Heart right ventricle (tissue), 16 donors: ENCODE measurements at regions of chr1 and their contacts with region 1.

Region 1: GRCh38 chr1:225766967-225767633 is 10.5 kb upstream of the SRP9 start:
- DNase-seq: peak in 1 of 2 donors; percentile 65
- ATAC-seq: peak; percentile 29 to 77 (median 52)
- H3K4me3 ChIP-seq: no peak overlapping the region
- H3K27ac ChIP-seq: peak overlapping the region; percentile 46 to 89 (median 77)
- H3K4me1 ChIP-seq: peaks cover 27 to 94% (median 72%) of the 10 kb centered on the region in 9 donors
- H3K27me3 ChIP-seq: no peaks in the 10 kb centered on the region
- CTCF ChIP-seq: no peak

Region 2: DNA sequence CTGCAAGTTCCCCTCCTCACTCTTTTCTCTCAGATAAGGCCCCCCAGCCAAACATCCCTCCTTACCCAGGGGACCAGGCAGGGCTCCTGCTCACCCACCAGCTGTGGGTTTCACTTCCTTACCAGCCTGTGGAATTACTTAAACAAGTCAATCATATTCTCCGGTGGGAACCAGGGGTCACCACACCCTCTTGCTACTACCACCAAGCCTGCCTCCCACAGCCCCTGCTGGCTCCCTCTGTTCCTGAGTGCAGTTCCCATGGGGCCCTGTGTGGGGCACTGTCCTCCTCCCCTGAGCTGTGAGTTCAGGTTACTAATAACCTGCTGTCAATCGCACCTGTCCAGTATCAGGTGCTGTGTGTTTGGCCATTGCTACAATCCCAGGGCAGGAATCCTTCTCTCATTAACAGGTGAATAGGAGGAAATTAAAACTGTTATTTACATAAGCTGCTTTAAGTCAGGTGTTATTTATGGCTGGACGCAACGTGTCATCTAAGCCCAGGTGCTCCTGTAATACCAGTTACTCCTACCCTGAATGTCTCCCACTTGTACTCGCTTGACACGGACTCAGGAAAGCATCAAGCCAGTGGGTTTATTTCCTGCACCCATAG is 286.2 kb before region 1 on chr1:
- intact Hi-C with region 1: loop called in 3 of 10 experiments (anchors 2 to 5 kb)
- DNase-seq: peak in 1 of 2 donors; percentile 35
- ATAC-seq: peak in 6 of 8 donors; percentile 25 to 51 (median 36)
- H3K4me3 ChIP-seq: no peak overlapping the region
- H3K27ac ChIP-seq: no peak overlapping the region
- H3K4me1 ChIP-seq: peaks cover 0 to 10% (median 0%) of the 10 kb centered on the region in 9 donors
- H3K27me3 ChIP-seq: no peaks in the 10 kb centered on the region
- CTCF ChIP-seq: peak; percentile 28 to 76 (median 69)

Region 3: DNA sequence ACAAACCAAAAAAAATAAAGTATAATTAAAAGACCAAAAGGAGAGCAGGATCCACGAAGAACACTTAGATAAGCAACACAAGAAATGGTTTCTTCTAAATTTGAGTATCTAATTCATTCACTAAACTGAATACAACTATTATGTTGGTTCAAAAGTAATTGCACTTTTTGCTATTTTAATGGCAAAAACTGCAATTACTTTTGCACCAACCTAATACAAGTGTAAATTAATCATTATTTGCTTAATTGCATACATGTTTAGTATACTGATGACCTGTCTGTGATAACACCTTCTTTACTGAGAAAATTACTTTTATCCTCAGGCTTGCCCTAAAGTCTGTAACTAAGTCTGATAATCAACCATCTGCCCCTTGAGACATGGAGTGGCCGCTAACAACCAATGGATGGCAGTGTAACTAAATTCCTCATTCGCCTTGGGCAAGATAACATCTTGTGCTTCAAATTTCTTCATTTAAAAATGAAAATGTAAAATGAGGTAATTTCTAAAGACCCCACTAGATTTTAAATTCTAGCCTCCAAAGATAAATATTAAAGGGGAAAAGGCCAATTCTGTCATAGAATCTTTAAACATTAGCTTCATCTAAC is 199.4 kb before region 1 on chr1:
- intact Hi-C with region 1: loop called in 2 of 10 experiments (anchors 5 kb)
- DNase-seq: no peak
- ATAC-seq: no peak
- H3K4me3 ChIP-seq: no peak overlapping the region
- H3K27ac ChIP-seq: no peak overlapping the region
- H3K4me1 ChIP-seq: peaks cover 0 to 46% (median 23%) of the 10 kb centered on the region in 9 donors
- H3K27me3 ChIP-seq: no peaks in the 10 kb centered on the region
- CTCF ChIP-seq: peak in 5 of 9 donors; percentile 11 to 37 (median 25)

Region 4: DNA sequence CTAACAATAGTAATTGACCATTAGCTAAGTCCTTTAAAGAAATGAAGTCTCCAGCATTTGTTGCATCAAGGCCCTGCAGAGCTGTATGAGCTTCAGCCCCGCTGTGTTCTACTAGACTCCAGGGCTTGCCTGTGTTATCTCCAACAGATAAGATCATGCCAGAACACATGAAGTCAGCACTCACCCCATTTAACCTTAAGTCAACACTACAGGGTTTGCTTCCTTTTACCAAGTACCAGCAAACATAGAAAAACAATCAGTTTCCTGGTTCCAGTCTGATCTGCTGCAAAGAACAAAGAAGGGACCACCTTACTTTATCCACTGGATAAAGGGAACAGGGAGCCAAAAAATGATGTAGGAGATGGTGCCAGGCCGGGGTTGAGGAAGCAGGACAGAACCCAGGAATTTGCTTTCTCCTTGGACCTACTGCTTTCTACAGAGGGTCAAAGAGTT is 72.9 kb before region 1 on chr1:
- intact Hi-C with region 1: loop called in 2 of 10 experiments (anchors 2 to 5 kb)
- DNase-seq: peak; percentile 24 to 62
- ATAC-seq: peak; percentile 82 to 94 (median 92)
- H3K4me3 ChIP-seq: no peak overlapping the region
- H3K27ac ChIP-seq: peak overlapping the region in 8 of 10 donors; percentile 28 to 86 (median 59)
- H3K4me1 ChIP-seq: peaks cover 10 to 77% (median 59%) of the 10 kb centered on the region in 9 donors
- H3K27me3 ChIP-seq: no peaks in the 10 kb centered on the region
- CTCF ChIP-seq: no peak

Region 5: DNA sequence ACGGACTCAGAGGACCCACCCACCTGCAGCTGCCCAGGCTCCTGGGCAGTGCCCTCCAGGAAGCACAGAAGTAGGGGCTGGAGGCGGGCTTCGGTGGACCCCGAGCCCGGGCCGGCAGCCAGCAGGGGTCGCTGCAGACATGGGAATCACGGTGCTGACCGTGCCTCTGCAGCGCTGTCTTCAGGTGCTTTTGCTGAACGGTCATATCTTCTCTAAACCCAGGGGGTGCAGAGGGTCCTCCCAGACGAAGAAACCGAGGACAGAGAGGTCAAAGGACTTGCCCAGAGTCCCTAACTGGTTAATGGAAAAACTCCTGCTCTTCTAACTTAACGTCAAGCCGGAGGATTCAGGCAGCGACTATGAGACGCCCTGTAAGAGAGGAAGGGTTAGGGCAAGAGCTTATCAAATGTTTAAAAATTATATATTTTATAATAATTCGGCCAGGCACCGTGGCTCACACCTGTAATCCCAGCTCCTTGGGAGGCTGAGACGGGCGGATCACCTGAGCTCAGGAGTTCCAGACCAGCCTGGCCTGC is 195.4 kb after region 1 on chr1:
- intact Hi-C with region 1: no loop called
- DNase-seq: peak; percentile 25 to 57
- ATAC-seq: peak in 5 of 8 donors; percentile 46 to 70 (median 61)
- H3K4me3 ChIP-seq: no peak overlapping the region
- H3K27ac ChIP-seq: no peak overlapping the region
- H3K4me1 ChIP-seq: peaks cover 0 to 7% (median 0%) of the 10 kb centered on the region in 9 donors
- H3K27me3 ChIP-seq: peaks cover 0 to 16% (median 0%) of the 10 kb centered on the region in 7 donors
- CTCF ChIP-seq: peak; percentile 22 to 83 (median 61)

Region 6: DNA sequence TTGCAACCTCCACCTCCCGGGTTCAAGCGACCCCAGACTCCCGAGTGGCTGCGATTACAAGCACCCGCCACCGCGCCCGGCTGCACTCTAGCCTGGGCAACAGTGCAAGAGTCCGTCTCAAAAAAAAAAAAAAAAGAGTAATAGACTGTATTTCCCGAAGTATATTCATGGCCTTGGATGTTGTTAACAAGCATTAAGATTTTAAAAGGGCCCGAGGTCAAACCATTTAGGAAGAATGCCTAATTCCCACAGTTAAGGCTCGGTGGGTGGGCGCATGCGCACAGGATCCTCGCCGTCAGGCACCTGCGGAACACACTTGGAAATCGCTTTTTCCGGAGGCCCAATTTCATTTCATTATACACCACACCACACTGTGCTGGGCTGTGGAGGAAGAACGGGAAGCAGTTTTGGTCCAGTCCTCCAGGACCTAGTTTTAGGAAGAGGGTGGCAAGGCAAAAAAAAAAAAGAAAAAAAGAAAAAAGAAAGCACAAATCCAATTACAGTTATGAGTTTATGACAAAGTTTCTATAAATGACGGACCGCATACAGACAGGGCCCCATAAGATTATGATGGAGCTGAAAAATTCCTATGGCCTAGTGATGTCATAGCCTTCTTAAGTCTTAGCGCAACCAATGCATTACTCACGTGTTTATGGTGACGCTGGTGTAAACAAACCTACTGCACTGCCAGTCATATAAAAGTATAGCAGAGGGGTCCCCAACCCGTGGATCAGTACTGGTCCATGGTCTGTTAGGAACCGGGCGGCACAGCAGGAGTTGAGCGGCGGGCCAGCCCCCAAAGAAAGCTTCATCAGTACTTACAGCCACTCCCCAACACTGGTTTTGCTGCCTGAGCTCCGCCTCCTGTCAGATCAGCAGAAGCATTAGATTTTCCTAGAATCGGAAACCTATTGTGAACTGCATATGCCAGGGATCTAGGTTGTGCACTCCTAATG is 333.6 kb after region 1 on chr1:
- intact Hi-C with region 1: no loop called
- DNase-seq: peak; percentile 23 to 47
- ATAC-seq: peak in 7 of 8 donors; percentile 12 to 79 (median 68)
- H3K4me3 ChIP-seq: peak overlapping the region in 9 of 10 donors; percentile 27 to 60 (median 50)
- H3K27ac ChIP-seq: peak overlapping the region in 2 of 10 donors; percentile 29 to 35
- H3K4me1 ChIP-seq: peaks cover 0 to 15% (median 8%) of the 10 kb centered on the region in 9 donors
- H3K27me3 ChIP-seq: no peaks in the 10 kb centered on the region
- CTCF ChIP-seq: no peak